ENCODE measurements at regions of chr16 and their contacts with region 1.

Region 1: GRCh38 chr16:22190776-22191531 is 15.1 kb upstream of the EEF2K start:
- DNase-seq: peak; percentile 100
- ATAC-seq: peak; percentile 58
- H3K4me3 ChIP-seq: peak overlapping the region; percentile 53 to 78 (median 66)
- H3K4me3 Mint-ChIP-seq: peak overlapping the region; percentile 99
- H3K27ac ChIP-seq: peak overlapping the region; percentile 96 to 100
- H3K27ac Mint-ChIP-seq: peak overlapping the region; percentile 100
- H3K4me1 ChIP-seq: peaks cover 43 to 52% of the 10 kb centered on the region in 2 donors
- H3K4me1 Mint-ChIP-seq: peaks cover 59% of the 10 kb centered on the region
- H3K27me3 ChIP-seq: no peaks in the 10 kb centered on the region
- H3K27me3 Mint-ChIP-seq: peaks cover 3% of the 10 kb centered on the region
- CTCF ChIP-seq: no peak

Region 2: GRCh38 chr16:20900299-20901067 is 1290.5 kb before region 1 on chr16 and contains the starts of genes DCUN1D3 and LYRM1:
- CTCF ChIA-PET with region 1: no interaction called
- POLR2A ChIA-PET with region 1: interaction called, 3 read pairs
- intact Hi-C with region 1: loop called (anchors 10 kb)
- DNase-seq: peak; percentile 92
- ATAC-seq: peak; percentile 76
- H3K4me3 ChIP-seq: peak within 1 kb of the TSS; percentile 89 to 96 (median 95)
- H3K4me3 Mint-ChIP-seq: peak within 1 kb of the TSS; percentile 94
- H3K27ac ChIP-seq: peak within 1 kb of the TSS; percentile 77 to 96
- H3K27ac Mint-ChIP-seq: peak within 1 kb of the TSS; percentile 95
- H3K4me1 ChIP-seq: peaks cover 49 to 52% of the 10 kb centered on the region in 2 donors
- H3K4me1 Mint-ChIP-seq: peaks cover 68% of the 10 kb centered on the region
- H3K27me3 ChIP-seq: no peaks in the 10 kb centered on the region
- H3K27me3 Mint-ChIP-seq: no peaks in the 10 kb centered on the region
- CTCF ChIP-seq: no peak
- total RNA-seq, gene DCUN1D3: 5.0 and 5.7 TPM in 2 replicates
- total RNA-seq, gene LYRM1: 19.0 and 21.8 TPM in 2 replicates

Region 3: DNA sequence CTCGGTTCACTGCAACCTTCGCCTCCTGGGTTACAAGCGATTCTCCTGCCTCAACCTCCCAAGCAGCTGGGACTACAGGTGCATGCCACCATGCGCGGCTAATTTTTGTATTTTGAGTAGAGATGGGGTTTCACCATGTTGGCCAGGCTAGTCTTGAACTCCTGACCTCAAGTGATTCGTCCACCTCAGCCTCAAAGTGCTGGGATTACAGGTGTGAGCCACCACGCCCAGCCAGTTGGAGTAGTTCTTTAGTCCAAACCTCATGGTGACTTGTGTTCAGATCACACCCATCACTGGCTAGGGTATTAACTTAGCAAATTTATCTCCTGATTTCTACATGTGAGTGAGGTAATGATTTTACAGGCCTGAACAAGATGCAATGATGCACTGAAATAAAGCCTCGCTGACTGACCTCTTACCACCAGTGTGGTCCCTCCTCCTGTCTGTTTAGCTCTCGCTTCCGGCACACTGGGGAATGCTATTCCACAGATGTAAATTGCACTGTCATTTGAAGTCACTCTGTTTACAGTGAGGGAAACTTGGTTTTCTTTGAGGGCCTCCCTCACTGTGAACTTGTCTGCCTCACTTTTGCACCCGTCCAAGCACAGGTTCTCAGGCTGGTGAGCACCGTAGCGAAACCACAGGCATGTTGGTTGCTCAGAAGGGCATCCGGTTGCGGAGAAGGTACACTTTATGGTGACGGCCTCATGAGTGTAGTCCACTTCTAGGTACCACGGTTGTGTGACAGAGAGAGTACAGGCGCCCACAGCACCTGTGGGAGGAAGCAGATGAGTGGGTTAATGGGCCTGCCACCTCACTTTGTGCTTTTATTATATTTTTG is 544.0 kb before region 1 on chr16:
- CTCF ChIA-PET with region 1: no interaction called
- POLR2A ChIA-PET with region 1: interaction called, 3 read pairs
- intact Hi-C with region 1: loop called (anchors 5 kb)
- DNase-seq: peak; percentile 77
- ATAC-seq: peak; percentile 86
- H3K4me3 ChIP-seq: peak overlapping the region in 2 of 5 experiments; percentile 2 to 8
- H3K4me3 Mint-ChIP-seq: peak overlapping the region; percentile 73
- H3K27ac ChIP-seq: peak overlapping the region; percentile 83 to 92
- H3K27ac Mint-ChIP-seq: peak overlapping the region; percentile 89
- H3K4me1 ChIP-seq: peaks cover 76 to 79% of the 10 kb centered on the region in 2 donors
- H3K4me1 Mint-ChIP-seq: peaks cover 69% of the 10 kb centered on the region
- H3K27me3 ChIP-seq: no peaks in the 10 kb centered on the region
- H3K27me3 Mint-ChIP-seq: no peaks in the 10 kb centered on the region
- CTCF ChIP-seq: no peak

Region 4: DNA sequence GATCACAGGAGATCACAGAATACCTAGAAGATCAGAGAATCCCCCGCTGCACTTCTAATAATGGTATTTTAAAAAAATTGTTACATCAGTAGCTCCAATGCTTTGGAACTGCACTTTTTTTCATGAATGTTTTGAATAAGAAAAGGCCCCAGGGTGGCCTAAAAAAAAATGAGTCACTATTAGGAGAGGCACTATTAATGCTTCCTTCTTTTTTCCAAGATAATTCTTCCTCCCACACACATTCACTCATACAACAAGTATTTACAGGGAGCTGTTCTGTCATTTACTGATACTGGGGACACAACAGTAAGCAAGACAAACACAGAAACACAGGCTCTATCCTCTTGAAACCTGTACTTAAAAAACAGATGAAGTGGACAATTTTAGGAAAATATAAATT is 189.4 kb before region 1 on chr16:
- CTCF ChIA-PET with region 1: interaction called, 97 read pairs
- POLR2A ChIA-PET with region 1: interaction called, 9 read pairs
- intact Hi-C with region 1: loop called (anchors 1 kb)
- DNase-seq: peak; percentile 16
- ATAC-seq: no peak
- H3K4me3 ChIP-seq: no peak overlapping the region
- H3K4me3 Mint-ChIP-seq: no peak overlapping the region
- H3K27ac ChIP-seq: no peak overlapping the region
- H3K27ac Mint-ChIP-seq: no peak overlapping the region
- H3K4me1 ChIP-seq: peaks cover 4 to 9% of the 10 kb centered on the region in 2 donors
- H3K4me1 Mint-ChIP-seq: peaks cover 6% of the 10 kb centered on the region
- H3K27me3 ChIP-seq: no peaks in the 10 kb centered on the region
- H3K27me3 Mint-ChIP-seq: no peaks in the 10 kb centered on the region
- CTCF ChIP-seq: no peak

Region 5: GRCh38 chr16:22126103-22126502 is 64.9 kb before region 1 on chr16:
- CTCF ChIA-PET with region 1: no interaction called
- POLR2A ChIA-PET with region 1: no interaction called
- intact Hi-C with region 1: no loop called
- DNase-seq: no peak
- ATAC-seq: no peak
- H3K4me3 ChIP-seq: no peak overlapping the region
- H3K4me3 Mint-ChIP-seq: no peak overlapping the region
- H3K27ac ChIP-seq: no peak overlapping the region
- H3K27ac Mint-ChIP-seq: no peak overlapping the region
- H3K4me1 ChIP-seq: peaks cover 4 to 5% of the 10 kb centered on the region in 2 donors
- H3K4me1 Mint-ChIP-seq: peaks cover 12% of the 10 kb centered on the region
- H3K27me3 ChIP-seq: peaks cover 0 to 6% (median 1%) of the 10 kb centered on the region in 4 experiments
- H3K27me3 Mint-ChIP-seq: peaks cover 15% of the 10 kb centered on the region
- CTCF ChIP-seq: no peak

Region 6: GRCh38 chr16:22206013-22206841 is 15.3 kb after region 1 on chr16 and contains the start of gene EEF2K:
- CTCF ChIA-PET with region 1: interaction called, 89 read pairs
- POLR2A ChIA-PET with region 1: interaction called, 28 read pairs
- intact Hi-C with region 1: loop called (anchors 1 kb)
- DNase-seq: peak; percentile 91
- ATAC-seq: peak; percentile 85
- H3K4me3 ChIP-seq: peak within 1 kb of the TSS; percentile 60 to 82 (median 80)
- H3K4me3 Mint-ChIP-seq: peak within 1 kb of the TSS; percentile 88
- H3K27ac ChIP-seq: peak within 1 kb of the TSS; percentile 68 to 86
- H3K27ac Mint-ChIP-seq: peak within 1 kb of the TSS; percentile 68
- H3K4me1 ChIP-seq: peaks cover 10 to 23% of the 10 kb centered on the region in 2 donors
- H3K4me1 Mint-ChIP-seq: peaks cover 25% of the 10 kb centered on the region
- H3K27me3 ChIP-seq: no peaks in the 10 kb centered on the region
- H3K27me3 Mint-ChIP-seq: no peaks in the 10 kb centered on the region
- CTCF ChIP-seq: peak; percentile 76
- total RNA-seq, gene EEF2K: 28.7 and 30.0 TPM in 2 replicates

Region 7: GRCh38 chr16:22721511-22722100 is 530.7 kb after region 1 on chr16:
- CTCF ChIA-PET with region 1: no interaction called
- POLR2A ChIA-PET with region 1: no interaction called
- intact Hi-C with region 1: no loop called
- DNase-seq: no peak
- ATAC-seq: no peak
- H3K4me3 ChIP-seq: no peak overlapping the region
- H3K4me3 Mint-ChIP-seq: no peak overlapping the region
- H3K27ac ChIP-seq: no peak overlapping the region
- H3K27ac Mint-ChIP-seq: no peak overlapping the region
- H3K4me1 ChIP-seq: no peaks in the 10 kb centered on the region
- H3K4me1 Mint-ChIP-seq: no peaks in the 10 kb centered on the region
- H3K27me3 ChIP-seq: peaks cover 0 to 7% (median 0%) of the 10 kb centered on the region in 4 experiments
- H3K27me3 Mint-ChIP-seq: peaks cover 34% of the 10 kb centered on the region
- CTCF ChIP-seq: no peak